HEK293 (cell line): ENCODE measurements at regions of chr1 and their contacts with region 1.

Region 1: GRCh38 chr1:111030590-111030989 is 66.9 kb upstream of the LRIF1 start:
- H3K4me3 ChIP-seq: no peak overlapping the region
- H3K27ac ChIP-seq: no peak overlapping the region
- H3K4me1 ChIP-seq: no peaks in the 10 kb centered on the region
- CTCF ChIP-seq: no peak

Region 2: GRCh38 chr1:111015225-111015624 is 15.4 kb before region 1 on chr1:
- CTCF ChIA-PET with region 1: interaction called, 23 read pairs
- POLR2A ChIA-PET with region 1: no interaction called
- H3K4me3 ChIP-seq: no peak overlapping the region
- H3K27ac ChIP-seq: no peak overlapping the region
- H3K4me1 ChIP-seq: no peaks in the 10 kb centered on the region
- CTCF ChIP-seq: no peak

Region 3: DNA sequence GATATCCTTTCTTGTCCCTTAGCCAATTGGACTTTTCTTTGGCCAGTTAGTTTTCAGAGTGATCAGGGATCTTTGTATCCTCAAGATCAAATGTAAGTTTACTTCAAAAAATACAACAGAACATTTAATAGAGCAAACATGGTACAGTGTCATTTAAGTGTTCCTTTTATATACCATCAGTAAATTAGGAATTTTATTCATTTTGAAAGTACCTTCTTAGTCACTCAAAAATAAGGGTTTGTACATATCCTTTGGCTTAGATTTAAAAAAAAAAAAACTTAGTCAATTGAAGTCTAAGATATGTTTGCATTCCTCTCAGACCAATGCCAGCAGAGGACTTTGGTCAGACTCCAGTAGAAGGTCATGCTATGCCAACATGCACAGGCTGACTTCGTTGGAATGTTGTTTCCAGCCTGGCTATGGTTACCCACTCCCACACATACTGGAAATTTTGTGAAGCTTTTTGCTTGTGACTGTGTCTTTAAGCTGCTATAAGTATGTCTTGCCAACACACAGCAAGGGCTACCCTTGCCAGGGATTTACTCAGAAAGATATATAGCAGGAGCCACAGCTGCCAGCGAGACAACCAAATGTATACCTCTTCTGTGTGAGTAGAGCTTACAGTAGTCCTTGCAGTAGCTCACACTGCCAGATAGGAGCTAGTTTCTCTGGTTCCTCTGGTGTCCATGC is 14.6 kb after region 1 on chr1:
- CTCF ChIA-PET with region 1: interaction called, 14 read pairs
- POLR2A ChIA-PET with region 1: no interaction called
- H3K4me3 ChIP-seq: no peak overlapping the region
- H3K27ac ChIP-seq: no peak overlapping the region
- H3K4me1 ChIP-seq: no peaks in the 10 kb centered on the region
- CTCF ChIP-seq: no peak